Adrenal gland (tissue), 19 donors: ENCODE measurements at regions of chr18 and their contacts with region 1.

Region 1: GRCh38 chr18:47050468-47050867 is 15.0 kb upstream of the ELOA2 start:
- DNase-seq: peak in 4 of 7 donors; percentile 16 to 47 (median 34)
- H3K4me3 ChIP-seq: no peak overlapping the region
- H3K27ac ChIP-seq: no peak overlapping the region
- H3K4me1 ChIP-seq: no peaks in the 10 kb centered on the region
- H3K27me3 ChIP-seq: no peaks in the 10 kb centered on the region
- CTCF ChIP-seq: peak; percentile 49 to 69 (median 66)
- POLR2A ChIP-seq: no peak

Region 2: DNA sequence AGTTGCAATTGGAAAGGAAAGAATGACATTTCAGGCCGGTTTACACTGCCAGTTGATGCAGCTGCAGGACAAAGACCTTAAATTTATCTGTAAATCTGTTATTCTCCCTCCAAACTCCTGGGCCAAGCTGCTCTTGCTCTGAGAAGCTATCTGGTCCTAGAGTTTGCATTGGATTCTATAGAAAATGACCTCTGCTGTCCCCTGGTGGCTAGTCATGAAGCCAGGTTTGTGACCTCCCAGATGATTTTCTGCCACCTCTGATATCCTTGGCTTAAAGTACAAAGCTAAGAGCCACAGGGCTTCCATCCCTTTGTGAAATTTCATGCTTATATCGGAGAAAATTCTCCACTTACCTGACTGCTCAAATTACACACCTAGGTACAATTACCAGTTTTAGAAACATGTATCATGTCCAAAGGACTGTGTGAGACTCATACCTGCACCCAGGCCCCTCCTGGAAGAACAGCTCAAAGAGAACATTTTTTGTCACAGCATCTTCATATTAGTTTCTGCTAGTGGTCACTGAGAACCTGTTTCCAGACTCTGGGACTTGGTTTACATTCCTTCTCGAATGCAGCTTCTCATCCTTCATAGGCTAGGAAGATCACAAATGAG is 154.5 kb after region 1 on chr18:
- intact Hi-C with region 1: loop called in 1 of 2 experiments (anchors 5 kb)
- DNase-seq: peak; percentile 26 to 72 (median 43)
- H3K4me3 ChIP-seq: no peak overlapping the region
- H3K27ac ChIP-seq: no peak overlapping the region
- H3K4me1 ChIP-seq: no peaks in the 10 kb centered on the region
- H3K27me3 ChIP-seq: peaks cover 9% of the 10 kb centered on the region
- CTCF ChIP-seq: peak; percentile 78 to 91 (median 86)
- POLR2A ChIP-seq: no peak